T-cell (primary cell): ENCODE measurements at regions of chr19 and their contacts with region 1.

Region 1: DNA sequence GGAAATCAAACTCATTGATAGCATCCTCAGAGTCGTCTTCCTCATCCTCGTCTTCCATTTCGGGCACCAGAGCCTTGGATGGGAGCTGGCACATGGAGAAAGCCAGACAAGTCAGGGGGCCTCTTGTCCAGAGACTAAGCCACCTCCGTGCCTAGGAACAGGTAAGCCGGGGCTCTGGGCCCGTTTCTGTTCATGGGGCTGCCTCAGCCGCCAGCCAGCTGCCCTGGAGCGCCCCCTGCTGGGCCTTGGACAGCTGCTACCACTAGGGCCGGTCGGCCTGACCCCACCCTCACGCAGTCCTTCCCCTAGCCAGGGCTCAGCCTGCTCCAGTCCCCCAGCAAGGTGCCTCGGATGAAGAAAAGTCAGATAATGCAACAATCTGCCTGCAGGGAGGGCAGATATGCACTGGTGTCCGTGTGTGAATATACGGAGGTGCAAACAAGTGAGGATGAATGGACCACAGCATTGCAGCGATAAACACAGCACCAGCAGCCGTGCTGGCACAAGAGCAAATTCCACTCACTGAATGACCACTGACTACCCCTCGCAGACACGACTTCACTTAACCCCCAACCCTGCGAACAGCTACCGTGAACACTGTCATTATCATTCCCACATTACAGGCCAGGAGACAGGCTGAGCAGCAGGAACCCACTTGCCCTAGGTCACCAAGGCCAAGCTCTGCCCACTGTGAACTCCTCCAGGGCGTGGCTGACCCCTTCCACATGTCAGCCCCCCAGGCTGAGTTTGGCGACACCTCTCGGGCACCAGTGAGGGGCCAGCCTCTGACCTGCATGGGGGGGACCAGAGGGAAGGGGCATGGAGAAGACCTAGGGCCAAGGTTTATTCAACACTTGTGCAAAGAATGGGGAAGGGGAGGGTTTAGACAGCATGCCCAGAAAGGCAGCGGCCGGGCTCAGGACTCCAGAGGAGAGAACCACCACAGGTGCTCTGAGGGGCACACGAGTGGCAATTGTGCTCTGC is 12.1 kb upstream of the PRKD2 start:
- DNase-seq: peak; percentile 51 to 91 (median 76)
- ATAC-seq: peak; percentile 86 to 94 (median 91)
- H3K4me3 ChIP-seq: no peak overlapping the region
- H3K4me3 Mint-ChIP-seq: no peak overlapping the region
- H3K27ac ChIP-seq: no peak overlapping the region
- H3K27ac Mint-ChIP-seq: peak overlapping the region in 1 of 2 donors; percentile 44
- H3K4me1 ChIP-seq: peaks cover 0 to 13% of the 10 kb centered on the region in 2 experiments
- H3K4me1 Mint-ChIP-seq: peaks cover 8 to 23% (median 16%) of the 10 kb centered on the region in 3 donors
- H3K27me3 ChIP-seq: no peaks in the 10 kb centered on the region
- H3K27me3 Mint-ChIP-seq: no peaks in the 10 kb centered on the region

Region 2: GRCh38 chr19:46624958-46625661 is 103.9 kb before region 1 on chr19 and contains the start of gene PTGIR:
- CTCF ChIA-PET with region 1: no interaction called
- POLR2A ChIA-PET with region 1: no interaction called
- DNase-seq: peak in 1 of 35 experiments; percentile 20
- ATAC-seq: peak in 3 of 4 experiments; percentile 17 to 38 (median 34)
- H3K4me3 ChIP-seq: peak within 1 kb of the TSS; percentile 6 to 39
- H3K4me3 Mint-ChIP-seq: peak within 1 kb of the TSS in 2 of 3 donors; percentile 25 to 84
- H3K27ac ChIP-seq: no peak within 1 kb of the TSS
- H3K27ac Mint-ChIP-seq: peak within 1 kb of the TSS; percentile 68 to 78
- H3K4me1 ChIP-seq: peaks cover 34 to 49% of the 10 kb centered on the region in 2 experiments
- H3K4me1 Mint-ChIP-seq: peaks cover 29 to 58% (median 43%) of the 10 kb centered on the region in 3 donors
- H3K27me3 ChIP-seq: peaks cover 0 to 39% of the 10 kb centered on the region in 2 experiments
- H3K27me3 Mint-ChIP-seq: no peaks in the 10 kb centered on the region
- total RNA-seq, gene PTGIR: 1.2 to 5.4 (median 3.5) TPM

Region 3: DNA sequence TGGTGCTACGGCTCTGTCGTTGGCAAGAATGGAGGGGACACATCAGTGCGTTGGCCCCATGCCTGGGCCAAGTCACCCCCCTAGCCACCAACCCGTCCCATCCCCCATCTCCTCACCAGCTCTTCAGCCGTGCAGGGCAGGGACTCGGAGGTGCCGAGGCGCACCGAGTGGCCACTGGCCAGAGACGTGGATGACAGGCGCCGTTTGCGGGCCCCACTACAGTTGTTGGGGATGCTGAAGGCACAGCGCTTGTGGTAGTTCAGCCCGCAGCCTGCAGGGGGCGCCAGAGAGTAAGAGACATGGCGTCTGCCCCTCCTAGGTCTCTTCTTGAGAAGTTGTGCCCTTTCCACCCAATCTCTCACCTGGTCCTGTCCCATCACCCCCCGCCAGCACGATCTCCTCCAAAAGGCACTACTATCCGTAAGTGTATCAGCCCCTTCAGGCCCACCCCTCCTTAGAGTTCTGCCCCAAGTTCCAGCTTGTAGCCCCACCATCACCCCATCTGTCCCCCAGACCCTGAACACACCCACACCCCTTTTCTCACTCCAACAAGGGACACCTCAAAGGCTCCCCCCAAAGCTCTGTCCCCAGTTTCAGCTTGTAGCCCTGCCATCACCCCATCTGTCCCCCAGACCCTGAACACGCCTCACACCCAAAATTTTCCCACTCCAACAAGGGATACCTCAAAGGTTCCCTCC is 24.5 kb before region 1 on chr19:
- CTCF ChIA-PET with region 1: interaction called, 11 to 23 read pairs
- POLR2A ChIA-PET with region 1: interaction called in 1 of 2 experiments, 3 read pairs
- DNase-seq: peak; percentile 52 to 92 (median 84)
- ATAC-seq: peak; percentile 87 to 93 (median 91)
- H3K4me3 ChIP-seq: no peak overlapping the region
- H3K4me3 Mint-ChIP-seq: no peak overlapping the region
- H3K27ac ChIP-seq: no peak overlapping the region
- H3K27ac Mint-ChIP-seq: peak overlapping the region; percentile 28 to 79
- H3K4me1 ChIP-seq: peaks cover 0 to 13% of the 10 kb centered on the region in 2 experiments
- H3K4me1 Mint-ChIP-seq: peaks cover 11 to 19% (median 15%) of the 10 kb centered on the region in 3 donors
- H3K27me3 ChIP-seq: no peaks in the 10 kb centered on the region
- H3K27me3 Mint-ChIP-seq: no peaks in the 10 kb centered on the region

Region 4: DNA sequence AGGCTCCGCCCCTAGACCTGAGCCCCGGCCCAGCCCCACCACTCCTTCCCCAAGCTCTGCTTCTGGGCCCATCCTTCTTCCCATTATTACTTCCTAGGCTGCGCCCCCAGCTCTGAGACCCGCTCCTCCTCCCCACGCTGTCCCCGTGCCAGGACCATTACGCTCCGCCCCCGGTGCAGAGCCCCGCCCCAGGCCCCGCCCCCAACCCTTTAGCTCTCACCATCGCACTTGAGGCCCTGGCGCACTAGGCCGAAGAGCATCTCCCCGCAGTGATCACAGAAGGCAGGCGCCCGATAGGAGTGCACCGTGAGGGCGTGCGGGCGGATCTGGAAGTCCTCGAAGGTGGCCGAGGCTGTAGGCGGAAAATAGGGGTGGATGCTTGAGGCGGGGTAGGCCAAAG is 18.3 kb before region 1 on chr19:
- CTCF ChIA-PET with region 1: interaction called, 10 to 19 read pairs
- POLR2A ChIA-PET with region 1: interaction called in 1 of 2 experiments, 3 read pairs
- DNase-seq: no peak
- ATAC-seq: no peak
- H3K4me3 ChIP-seq: no peak overlapping the region
- H3K4me3 Mint-ChIP-seq: no peak overlapping the region
- H3K27ac ChIP-seq: no peak overlapping the region
- H3K27ac Mint-ChIP-seq: peak overlapping the region in 1 of 2 donors; percentile 48
- H3K4me1 ChIP-seq: peaks cover 12 to 32% of the 10 kb centered on the region in 2 experiments
- H3K4me1 Mint-ChIP-seq: peaks cover 27 to 43% (median 29%) of the 10 kb centered on the region in 3 donors
- H3K27me3 ChIP-seq: no peaks in the 10 kb centered on the region
- H3K27me3 Mint-ChIP-seq: no peaks in the 10 kb centered on the region

Region 5: DNA sequence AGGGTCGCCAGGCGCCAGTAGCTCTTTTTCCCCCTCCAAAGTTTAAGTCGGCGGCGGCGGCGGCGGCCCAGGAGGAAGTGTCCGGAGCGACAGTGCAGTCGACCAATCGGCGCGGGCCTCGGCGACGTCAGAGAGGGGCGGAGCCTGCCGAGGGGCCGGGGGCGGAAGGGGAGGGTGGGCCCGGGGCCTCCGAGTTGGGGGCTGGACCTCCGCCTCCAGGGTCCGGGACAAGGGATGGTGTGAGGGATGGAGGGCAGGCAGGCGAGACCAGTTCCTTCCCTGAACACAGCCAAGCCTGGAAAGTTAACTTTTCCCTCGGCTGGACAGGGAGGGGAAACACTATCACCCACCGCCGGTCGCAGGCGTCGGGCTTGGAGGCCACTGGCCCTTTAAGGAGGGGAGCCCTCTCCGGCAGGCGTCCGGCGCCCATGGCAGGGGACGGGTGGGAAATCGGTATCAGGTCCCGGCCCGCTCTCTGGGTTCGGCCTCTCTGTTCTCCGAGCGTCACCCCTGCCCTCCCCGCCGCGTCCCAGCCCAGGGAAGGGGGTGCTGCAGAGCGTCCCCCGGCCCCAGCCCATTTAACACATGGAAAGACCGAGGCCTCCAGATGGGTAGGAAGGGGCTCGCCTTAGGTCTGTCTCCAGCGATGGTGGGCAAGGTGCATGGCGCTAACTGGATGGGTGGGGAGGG is 11.8 kb before region 1 on chr19 and contains the start of gene PRKD2:
- CTCF ChIA-PET with region 1: interaction called, 6 to 19 read pairs
- POLR2A ChIA-PET with region 1: no interaction called
- DNase-seq: peak; percentile 61 to 87 (median 80)
- ATAC-seq: peak; percentile 46 to 61 (median 51)
- H3K4me3 ChIP-seq: peak within 1 kb of the TSS; percentile 93 to 99
- H3K4me3 Mint-ChIP-seq: peak within 1 kb of the TSS; percentile 90 to 98 (median 94)
- H3K27ac ChIP-seq: peak within 1 kb of the TSS; percentile 84
- H3K27ac Mint-ChIP-seq: peak within 1 kb of the TSS; percentile 98
- H3K4me1 ChIP-seq: peaks cover 25 to 71% of the 10 kb centered on the region in 2 experiments
- H3K4me1 Mint-ChIP-seq: peaks cover 45 to 60% (median 55%) of the 10 kb centered on the region in 3 donors
- H3K27me3 ChIP-seq: no peaks in the 10 kb centered on the region
- H3K27me3 Mint-ChIP-seq: no peaks in the 10 kb centered on the region
- total RNA-seq, gene PRKD2: 121 to 145 (median 138) TPM